B cell (primary cell): ENCODE measurements at regions of chr11 and their contacts with region 1.

Region 1: GRCh38 chr11:62081378-62082291 is 42.2 kb upstream of the INCENP start:
- DNase-seq: peak; percentile 84
- ATAC-seq: peak; percentile 92
- H3K4me3 ChIP-seq: peak overlapping the region in 4 of 5 experiments; percentile 12 to 47 (median 23)
- H3K4me3 Mint-ChIP-seq: peak overlapping the region; percentile 75
- H3K27ac ChIP-seq: no peak overlapping the region
- H3K27ac Mint-ChIP-seq: no peak overlapping the region
- H3K4me1 ChIP-seq: peaks cover 6 to 9% of the 10 kb centered on the region in 2 donors
- H3K4me1 Mint-ChIP-seq: peaks cover 9% of the 10 kb centered on the region
- H3K27me3 ChIP-seq: peaks cover 0 to 3% (median 0%) of the 10 kb centered on the region in 4 experiments
- H3K27me3 Mint-ChIP-seq: no peaks in the 10 kb centered on the region
- CTCF ChIP-seq: peak; percentile 98

Region 2: GRCh38 chr11:61871158-61871597 is 210.5 kb before region 1 on chr11:
- CTCF ChIA-PET with region 1: interaction called, 307 read pairs
- POLR2A ChIA-PET with region 1: no interaction called
- intact Hi-C with region 1: loop called (anchors 1 kb)
- DNase-seq: peak; percentile 88
- ATAC-seq: peak; percentile 97
- H3K4me3 ChIP-seq: peak overlapping the region in 4 of 5 experiments; percentile 13 to 38 (median 26)
- H3K4me3 Mint-ChIP-seq: peak overlapping the region; percentile 84
- H3K27ac ChIP-seq: no peak overlapping the region
- H3K27ac Mint-ChIP-seq: peak overlapping the region; percentile 83
- H3K4me1 ChIP-seq: peaks cover 9 to 12% of the 10 kb centered on the region in 2 donors
- H3K4me1 Mint-ChIP-seq: peaks cover 8% of the 10 kb centered on the region
- H3K27me3 ChIP-seq: peaks cover 0 to 4% (median 0%) of the 10 kb centered on the region in 4 experiments
- H3K27me3 Mint-ChIP-seq: no peaks in the 10 kb centered on the region
- CTCF ChIP-seq: peak; percentile 98

Region 3: GRCh38 chr11:61908730-61909315 is 172.8 kb before region 1 on chr11:
- CTCF ChIA-PET with region 1: interaction called, 424 read pairs
- POLR2A ChIA-PET with region 1: no interaction called
- intact Hi-C with region 1: no loop called
- DNase-seq: no peak
- ATAC-seq: no peak
- H3K4me3 ChIP-seq: no peak overlapping the region
- H3K4me3 Mint-ChIP-seq: no peak overlapping the region
- H3K27ac ChIP-seq: no peak overlapping the region
- H3K27ac Mint-ChIP-seq: no peak overlapping the region
- H3K4me1 ChIP-seq: peaks cover 0 to 9% of the 10 kb centered on the region in 2 donors
- H3K4me1 Mint-ChIP-seq: no peaks in the 10 kb centered on the region
- H3K27me3 ChIP-seq: peaks cover 0 to 3% (median 1%) of the 10 kb centered on the region in 4 experiments
- H3K27me3 Mint-ChIP-seq: peaks cover 6% of the 10 kb centered on the region
- CTCF ChIP-seq: no peak

Region 4: DNA sequence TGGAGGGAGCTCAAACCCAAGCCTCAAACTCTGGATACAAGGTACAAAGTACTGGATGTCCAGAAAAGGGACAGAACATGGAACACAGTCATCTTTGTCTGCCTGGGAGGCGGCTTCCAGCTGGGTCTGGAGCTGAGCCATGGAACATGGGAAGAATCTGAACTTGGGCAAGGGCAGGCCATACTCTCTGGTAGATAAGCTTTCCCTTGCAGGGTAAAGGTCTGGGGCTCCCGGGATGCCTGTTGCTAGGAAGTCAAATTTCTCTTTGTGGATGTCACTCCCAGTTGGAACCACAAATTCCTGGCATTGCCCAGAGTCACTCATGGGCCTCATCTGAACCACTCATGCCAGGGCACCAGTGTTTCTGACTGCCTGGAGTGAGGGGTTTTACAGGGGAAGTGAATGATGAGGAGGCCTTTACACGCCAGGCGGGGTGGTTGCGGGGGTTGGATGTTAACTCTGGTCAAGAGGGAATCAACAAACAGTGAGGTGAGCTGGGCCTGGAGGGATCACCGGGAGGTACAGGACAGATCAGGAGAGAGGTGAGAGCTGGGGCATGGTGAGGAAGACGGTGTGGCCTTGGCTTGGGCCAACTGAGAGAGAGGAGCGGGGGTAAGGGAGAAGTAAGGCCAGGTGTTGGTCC is 119.9 kb before region 1 on chr11:
- CTCF ChIA-PET with region 1: interaction called, 61 read pairs
- POLR2A ChIA-PET with region 1: interaction called, 6 read pairs
- intact Hi-C with region 1: loop called (anchors 5 kb)
- DNase-seq: no peak
- ATAC-seq: no peak
- H3K4me3 ChIP-seq: no peak overlapping the region
- H3K4me3 Mint-ChIP-seq: peak overlapping the region; percentile 40
- H3K27ac ChIP-seq: peak overlapping the region in 1 of 2 donors; percentile 89
- H3K27ac Mint-ChIP-seq: peak overlapping the region; percentile 84
- H3K4me1 ChIP-seq: peaks cover 41 to 53% of the 10 kb centered on the region in 2 donors
- H3K4me1 Mint-ChIP-seq: peaks cover 57% of the 10 kb centered on the region
- H3K27me3 ChIP-seq: no peaks in the 10 kb centered on the region
- H3K27me3 Mint-ChIP-seq: no peaks in the 10 kb centered on the region
- CTCF ChIP-seq: no peak

Region 5: GRCh38 chr11:62044639-62045121 is 37.0 kb before region 1 on chr11:
- CTCF ChIA-PET with region 1: interaction called, 15 read pairs
- POLR2A ChIA-PET with region 1: no interaction called
- intact Hi-C with region 1: no loop called
- DNase-seq: no peak
- ATAC-seq: no peak
- H3K4me3 ChIP-seq: no peak overlapping the region
- H3K4me3 Mint-ChIP-seq: no peak overlapping the region
- H3K27ac ChIP-seq: no peak overlapping the region
- H3K27ac Mint-ChIP-seq: no peak overlapping the region
- H3K4me1 ChIP-seq: peaks cover 22 to 29% of the 10 kb centered on the region in 2 donors
- H3K4me1 Mint-ChIP-seq: peaks cover 32% of the 10 kb centered on the region
- H3K27me3 ChIP-seq: peaks cover 0 to 4% (median 2%) of the 10 kb centered on the region in 4 experiments
- H3K27me3 Mint-ChIP-seq: peaks cover 12% of the 10 kb centered on the region
- CTCF ChIP-seq: no peak